ENCODE measurements at regions of chr21 and their contacts with region 1.

Region 1: GRCh38 chr21:46411236-46411635 is 47.5 kb upstream of the DIP2A start:
- DNase-seq: no peak
- H3K4me3 ChIP-seq: no peak overlapping the region
- H3K27ac ChIP-seq: no peak overlapping the region
- H3K4me1 ChIP-seq: no peaks in the 10 kb centered on the region
- H3K27me3 ChIP-seq: no peaks in the 10 kb centered on the region
- CTCF ChIP-seq: no peak
- EP300 ChIP-seq: no peak
- POLR2A ChIP-seq: no peak

Region 2: DNA sequence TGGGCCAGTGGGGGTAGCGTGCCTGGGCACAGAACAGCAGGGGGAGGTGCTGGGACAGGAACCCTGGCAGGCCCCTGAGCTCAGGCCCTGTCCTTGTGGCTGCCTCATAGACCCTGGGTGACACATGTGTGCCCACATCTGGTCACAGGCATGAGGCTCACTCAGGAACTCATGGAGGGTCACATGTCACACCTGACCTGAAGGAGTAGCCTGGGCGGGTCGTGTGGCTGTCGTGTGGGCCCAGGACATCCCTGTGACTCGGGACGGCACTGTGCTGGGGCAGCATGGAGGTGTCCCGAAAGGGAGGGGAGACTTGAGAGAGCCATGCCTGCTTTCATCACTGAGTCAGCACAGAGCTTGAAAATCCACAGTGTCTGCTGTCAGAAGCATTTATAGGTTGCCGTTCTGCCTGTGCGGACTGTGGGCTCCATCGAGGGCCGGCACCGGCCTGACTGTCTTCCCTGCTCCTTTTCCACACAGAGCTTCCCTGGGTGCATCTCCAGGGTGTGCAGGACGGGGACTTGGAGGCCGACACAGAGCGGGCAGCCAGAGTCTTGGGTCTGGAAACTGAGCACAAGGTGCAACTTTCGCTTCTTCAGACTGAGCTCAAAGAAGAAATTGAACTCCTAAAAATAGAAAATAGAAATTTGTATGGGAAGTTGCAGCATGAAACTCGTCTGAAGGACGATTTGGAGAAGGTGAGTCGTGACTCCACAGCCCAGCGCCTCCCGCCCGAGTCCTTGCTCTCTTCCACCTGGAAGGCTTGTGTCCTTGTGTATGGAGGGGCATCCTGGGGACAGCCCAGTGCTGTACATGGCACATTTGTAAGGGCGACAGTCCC is 54.5 kb before region 1 on chr21:
- intact Hi-C with region 1: loop called in 1 of 4 experiments (anchors 10 kb)
- DNase-seq: no peak
- H3K4me3 ChIP-seq: no peak overlapping the region
- H3K27ac ChIP-seq: no peak overlapping the region
- H3K4me1 ChIP-seq: no peaks in the 10 kb centered on the region
- H3K27me3 ChIP-seq: no peaks in the 10 kb centered on the region
- CTCF ChIP-seq: no peak
- EP300 ChIP-seq: no peak
- POLR2A ChIP-seq: no peak